HepG2 (cell line): ENCODE measurements at regions of chr13 and their contacts with region 1.

Region 1: GRCh38 chr13:40789275-40790133 is at the start of gene SLC25A15:
- DNase-seq: peak; percentile 67
- ATAC-seq: peak; percentile 90
- H3K4me3 ChIP-seq: peak within 1 kb of the TSS; percentile 89 to 97 (median 92)
- H3K27ac ChIP-seq: peak within 1 kb of the TSS; percentile 92
- H3K4me1 ChIP-seq: peaks cover 83% of the 10 kb centered on the region
- H3K27me3 ChIP-seq: no peaks in the 10 kb centered on the region; a peak in 1 of 5 replicates
- CTCF ChIP-seq: peak; percentile 71
- EP300 ChIP-seq: no peak; a peak in 1 of 4 replicates
- POLR2A ChIP-seq: peak; percentile 65 to 88; a peak in 3 of 4 replicates
- RAD21 ChIP-seq: peak; percentile 95
- total RNA-seq, gene SLC25A15: 39.1 and 47.6 TPM in 2 replicates

Region 2: GRCh38 chr13:40756042-40756441 is 33.5 kb before region 1 on chr13:
- CTCF ChIA-PET with region 1: no interaction called
- POLR2A ChIA-PET with region 1: no interaction called
- in situ Hi-C with region 1: no loop called
- intact Hi-C with region 1: no loop called
- DNase-seq: no peak
- ATAC-seq: no peak
- H3K4me3 ChIP-seq: no peak overlapping the region
- H3K27ac ChIP-seq: no peak overlapping the region
- H3K4me1 ChIP-seq: no peaks in the 10 kb centered on the region
- H3K27me3 ChIP-seq: no peaks in the 10 kb centered on the region
- CTCF ChIP-seq: no peak
- EP300 ChIP-seq: no peak
- POLR2A ChIP-seq: no peak
- RAD21 ChIP-seq: no peak

Region 3: GRCh38 chr13:40770934-40771618 is 18.4 kb before region 1 on chr13 and contains the start of gene MRPS31:
- CTCF ChIA-PET with region 1: no interaction called
- POLR2A ChIA-PET with region 1: interaction called, 14 read pairs
- in situ Hi-C with region 1: no loop called
- intact Hi-C with region 1: loop called (anchors 2 kb)
- DNase-seq: peak; percentile 92
- ATAC-seq: peak; percentile 99
- H3K4me3 ChIP-seq: peak within 1 kb of the TSS; percentile 86 to 97 (median 94)
- H3K27ac ChIP-seq: peak within 1 kb of the TSS; percentile 74
- H3K4me1 ChIP-seq: peaks cover 53% of the 10 kb centered on the region
- H3K27me3 ChIP-seq: no peaks in the 10 kb centered on the region; a peak in 1 of 5 replicates
- CTCF ChIP-seq: peak; percentile 44
- EP300 ChIP-seq: peak; percentile 50 to 73; a peak in 3 of 4 replicates
- POLR2A ChIP-seq: peak; percentile 79 to 97
- RAD21 ChIP-seq: peak; percentile 72
- total RNA-seq, gene MRPS31: 34.1 and 43.5 TPM in 2 replicates

Region 4: DNA sequence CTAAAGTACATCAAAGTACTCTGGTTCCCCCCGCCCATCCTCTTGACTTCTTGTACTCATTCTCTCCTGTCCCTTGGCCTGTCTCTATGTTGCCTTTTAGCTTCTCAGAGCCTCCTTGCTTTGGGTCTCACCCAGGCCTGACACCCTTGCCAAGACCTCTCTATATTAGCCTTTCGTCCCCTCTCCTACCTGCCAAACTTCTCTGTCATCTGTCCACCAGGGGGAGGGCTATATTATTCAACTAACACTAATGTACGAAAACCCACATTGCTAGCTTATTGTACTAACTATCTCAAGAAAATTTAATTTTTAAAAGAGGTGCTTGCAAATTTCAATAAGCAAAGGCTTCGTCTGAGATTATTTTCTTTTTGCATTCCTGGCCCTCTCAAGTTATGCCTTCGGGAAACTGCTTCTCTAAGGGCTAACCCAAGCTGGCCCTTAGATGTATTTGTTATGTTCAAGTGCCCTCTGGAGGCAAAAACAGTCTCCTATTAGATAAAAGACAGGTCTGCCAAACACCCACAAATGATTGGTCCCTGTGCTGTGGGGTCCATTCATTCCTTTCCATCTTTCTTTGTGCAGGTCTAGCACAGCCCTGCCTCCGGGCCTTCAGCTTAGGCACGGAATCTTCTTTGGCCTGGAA is 12.2 kb before region 1 on chr13:
- CTCF ChIA-PET with region 1: interaction called, 4 read pairs
- POLR2A ChIA-PET with region 1: interaction called, 16 read pairs
- in situ Hi-C with region 1: no loop called
- intact Hi-C with region 1: loop called (anchors 1 kb)
- DNase-seq: peak; percentile 71
- ATAC-seq: peak; percentile 86
- H3K4me3 ChIP-seq: peak overlapping the region; percentile 47 to 60 (median 59)
- H3K27ac ChIP-seq: peak overlapping the region; percentile 5
- H3K4me1 ChIP-seq: peaks cover 82% of the 10 kb centered on the region
- H3K27me3 ChIP-seq: no peaks in the 10 kb centered on the region
- CTCF ChIP-seq: peak; percentile 66
- EP300 ChIP-seq: no peak
- POLR2A ChIP-seq: no peak
- RAD21 ChIP-seq: no peak

Region 5: GRCh38 chr13:40813661-40814454 is 24.4 kb after region 1 on chr13:
- CTCF ChIA-PET with region 1: no interaction called
- POLR2A ChIA-PET with region 1: interaction called, 20 read pairs
- in situ Hi-C with region 1: no loop called
- intact Hi-C with region 1: no loop called
- DNase-seq: peak; percentile 30
- ATAC-seq: peak; percentile 87
- H3K4me3 ChIP-seq: no peak overlapping the region
- H3K27ac ChIP-seq: peak overlapping the region; percentile 58
- H3K4me1 ChIP-seq: peaks cover 15% of the 10 kb centered on the region
- H3K27me3 ChIP-seq: no peaks in the 10 kb centered on the region
- CTCF ChIP-seq: peak; percentile 80
- EP300 ChIP-seq: no peak
- POLR2A ChIP-seq: no peak
- RAD21 ChIP-seq: peak; percentile 60

Region 6: DNA sequence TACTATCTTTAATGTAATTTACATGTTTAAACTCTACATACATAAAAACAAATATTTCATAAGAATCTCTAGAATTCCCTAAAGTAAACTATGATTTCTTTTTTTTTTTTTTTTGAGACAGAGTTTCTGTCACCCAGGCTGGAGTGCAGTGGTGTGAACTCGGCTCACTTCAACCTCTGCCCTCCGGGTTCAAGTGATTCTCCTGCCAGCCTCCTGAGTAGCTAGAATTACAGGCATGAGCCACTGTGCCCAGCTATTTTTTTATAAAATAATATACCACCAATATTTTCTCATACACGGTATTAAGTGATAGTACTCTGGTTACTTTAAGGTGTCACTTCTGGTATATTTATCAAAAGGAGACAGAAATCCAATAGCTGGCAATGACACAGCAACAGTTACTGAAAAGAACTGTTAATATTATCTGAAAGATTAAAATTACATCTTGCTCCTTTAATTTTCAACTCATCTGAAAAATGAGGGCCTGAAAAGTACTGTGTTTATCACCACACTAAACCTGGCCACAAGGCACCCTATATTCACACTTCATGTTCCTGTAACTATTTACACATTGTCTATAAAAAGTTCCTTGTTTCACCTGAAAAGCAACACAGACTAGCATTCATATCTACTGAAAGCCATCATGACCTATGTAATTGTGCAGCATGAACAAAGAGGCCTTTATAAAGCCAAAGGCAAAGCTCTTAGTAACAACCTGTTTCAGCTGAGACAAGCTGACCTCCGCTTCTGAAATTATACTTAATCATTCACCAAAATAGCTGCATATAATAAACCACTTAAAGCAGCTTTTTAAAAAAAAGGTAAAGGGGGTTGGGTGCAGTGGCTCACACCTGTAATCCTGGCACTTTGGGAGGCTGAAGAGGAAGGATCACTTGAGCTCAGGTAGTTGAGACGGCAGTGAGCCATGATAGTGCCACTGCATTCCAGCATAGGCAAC is 106.0 kb after region 1 on chr13:
- CTCF ChIA-PET with region 1: no interaction called
- POLR2A ChIA-PET with region 1: interaction called, 4 read pairs
- in situ Hi-C with region 1: no loop called
- intact Hi-C with region 1: loop called (anchors 10 kb)
- DNase-seq: peak; percentile 94
- ATAC-seq: peak; percentile 99
- H3K4me3 ChIP-seq: peak overlapping the region; percentile 27 to 42 (median 28); a peak in 3 of 6 replicates
- H3K27ac ChIP-seq: peak overlapping the region; percentile 84
- H3K4me1 ChIP-seq: peaks cover 33% of the 10 kb centered on the region
- H3K27me3 ChIP-seq: no peaks in the 10 kb centered on the region
- CTCF ChIP-seq: no peak
- EP300 ChIP-seq: peak in 1 of 2 experiments; percentile 59; a peak in 2 of 4 replicates
- POLR2A ChIP-seq: no peak; a peak in 1 of 4 replicates
- RAD21 ChIP-seq: no peak

Region 7: DNA sequence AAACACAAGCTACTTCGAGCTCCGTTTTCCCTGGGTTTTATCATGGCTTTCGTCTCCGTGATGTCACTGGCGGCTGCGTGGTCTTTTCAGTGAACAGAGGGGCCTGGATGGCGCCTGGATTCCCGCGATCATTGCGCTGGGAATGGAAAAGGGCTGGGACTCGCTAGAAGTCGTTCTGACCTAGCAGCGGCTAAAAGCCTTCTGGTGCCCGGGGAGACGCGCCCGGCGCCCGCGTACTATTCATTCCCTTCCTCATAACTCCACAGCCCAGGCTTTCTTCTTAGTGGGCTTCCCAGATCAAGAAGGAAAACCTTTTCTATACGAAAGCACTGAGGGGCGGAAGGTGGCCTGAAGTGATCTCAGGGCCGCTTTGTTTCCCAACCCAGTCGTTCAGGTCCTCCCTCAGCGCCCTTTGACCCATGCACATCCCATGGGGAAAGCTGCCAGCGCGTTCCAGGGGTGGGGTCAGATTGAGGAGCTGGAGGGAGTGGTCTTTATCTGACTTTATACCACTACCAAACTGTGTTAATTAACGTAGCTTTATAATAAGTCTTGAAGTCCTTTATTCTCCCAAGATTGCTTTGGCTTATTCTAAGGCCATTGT is 133.0 kb after region 1 on chr13:
- CTCF ChIA-PET with region 1: no interaction called
- POLR2A ChIA-PET with region 1: interaction called, 22 read pairs
- in situ Hi-C with region 1: no loop called
- intact Hi-C with region 1: loop called (anchors 2 kb)
- DNase-seq: peak; percentile 10
- ATAC-seq: peak; percentile 19
- H3K4me3 ChIP-seq: no peak overlapping the region; a peak in 1 of 6 replicates
- H3K27ac ChIP-seq: no peak overlapping the region
- H3K4me1 ChIP-seq: peaks cover 27% of the 10 kb centered on the region
- H3K27me3 ChIP-seq: no peaks in the 10 kb centered on the region; a peak in 2 of 5 replicates
- CTCF ChIP-seq: no peak
- EP300 ChIP-seq: no peak
- POLR2A ChIP-seq: no peak
- RAD21 ChIP-seq: no peak

Region 8: GRCh38 chr13:41019011-41019487 is 229.5 kb after region 1 on chr13 and contains the start of gene ELF1:
- CTCF ChIA-PET with region 1: no interaction called
- POLR2A ChIA-PET with region 1: interaction called, 10 read pairs
- in situ Hi-C with region 1: no loop called
- intact Hi-C with region 1: no loop called
- DNase-seq: peak; percentile 65
- ATAC-seq: peak; percentile 60
- H3K4me3 ChIP-seq: peak within 1 kb of the TSS; percentile 46 to 61 (median 55); a peak in 5 of 6 replicates
- H3K27ac ChIP-seq: peak within 1 kb of the TSS; percentile 87
- H3K4me1 ChIP-seq: peaks cover 92% of the 10 kb centered on the region
- H3K27me3 ChIP-seq: no peaks in the 10 kb centered on the region
- CTCF ChIP-seq: no peak
- EP300 ChIP-seq: no peak
- POLR2A ChIP-seq: peak in 1 of 2 experiments; percentile 0; a peak in 1 of 4 replicates
- RAD21 ChIP-seq: no peak
- total RNA-seq, gene ELF1: 71.5 and 91.5 TPM in 2 replicates

Region 9: DNA sequence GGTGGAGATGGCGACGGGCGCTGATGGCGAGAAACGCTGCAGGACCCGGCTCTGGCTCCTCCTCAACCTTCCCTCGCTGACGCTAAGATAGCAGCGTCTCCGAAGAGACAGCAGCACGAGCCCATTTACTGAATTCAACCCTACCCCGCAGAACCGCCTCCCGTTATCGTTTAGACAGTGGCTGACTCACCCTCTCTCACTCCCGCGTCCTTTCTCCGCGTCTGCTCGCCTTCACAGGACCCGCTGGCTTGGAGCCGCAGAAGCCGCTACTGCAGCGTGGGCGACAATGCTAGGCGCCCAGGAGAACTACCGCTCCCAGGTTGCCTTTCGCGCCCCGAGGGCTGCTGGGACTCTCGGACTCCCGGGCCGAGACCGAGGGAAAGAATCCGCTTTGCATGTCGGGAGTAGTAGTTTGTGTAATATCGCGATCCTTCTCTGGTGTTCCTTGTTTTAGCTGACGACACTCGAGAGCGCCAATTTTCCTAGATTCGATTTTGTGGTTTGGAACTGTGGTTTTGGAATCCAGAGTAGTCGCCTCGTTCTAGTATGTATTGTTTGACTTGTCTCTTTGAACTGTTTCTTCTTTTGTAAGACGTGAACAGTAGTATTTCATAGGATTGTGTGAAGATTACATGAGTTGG is 343.1 kb after region 1 on chr13 and contains the start of gene KBTBD6:
- CTCF ChIA-PET with region 1: no interaction called
- POLR2A ChIA-PET with region 1: no interaction called
- in situ Hi-C with region 1: no loop called
- intact Hi-C with region 1: no loop called
- DNase-seq: peak; percentile 97
- ATAC-seq: peak; percentile 98
- H3K4me3 ChIP-seq: peak within 1 kb of the TSS; percentile 76 to 89 (median 84)
- H3K27ac ChIP-seq: peak within 1 kb of the TSS; percentile 66
- H3K4me1 ChIP-seq: peaks cover 54% of the 10 kb centered on the region
- H3K27me3 ChIP-seq: no peaks in the 10 kb centered on the region
- CTCF ChIP-seq: peak; percentile 23; the same call in 1 of the 2 replicates
- EP300 ChIP-seq: peak in 1 of 2 experiments; percentile 46; a peak in 1 of 4 replicates
- POLR2A ChIP-seq: peak; percentile 82 to 88
- RAD21 ChIP-seq: 0 out of 2 replicates have a peak, but pooled peaks have one; percentile 22
- total RNA-seq, gene KBTBD6: 12.0 and 18.8 TPM in 2 replicates